ENCODE measurements at regions of chr10 and their contacts with region 1.

Region 1: DNA sequence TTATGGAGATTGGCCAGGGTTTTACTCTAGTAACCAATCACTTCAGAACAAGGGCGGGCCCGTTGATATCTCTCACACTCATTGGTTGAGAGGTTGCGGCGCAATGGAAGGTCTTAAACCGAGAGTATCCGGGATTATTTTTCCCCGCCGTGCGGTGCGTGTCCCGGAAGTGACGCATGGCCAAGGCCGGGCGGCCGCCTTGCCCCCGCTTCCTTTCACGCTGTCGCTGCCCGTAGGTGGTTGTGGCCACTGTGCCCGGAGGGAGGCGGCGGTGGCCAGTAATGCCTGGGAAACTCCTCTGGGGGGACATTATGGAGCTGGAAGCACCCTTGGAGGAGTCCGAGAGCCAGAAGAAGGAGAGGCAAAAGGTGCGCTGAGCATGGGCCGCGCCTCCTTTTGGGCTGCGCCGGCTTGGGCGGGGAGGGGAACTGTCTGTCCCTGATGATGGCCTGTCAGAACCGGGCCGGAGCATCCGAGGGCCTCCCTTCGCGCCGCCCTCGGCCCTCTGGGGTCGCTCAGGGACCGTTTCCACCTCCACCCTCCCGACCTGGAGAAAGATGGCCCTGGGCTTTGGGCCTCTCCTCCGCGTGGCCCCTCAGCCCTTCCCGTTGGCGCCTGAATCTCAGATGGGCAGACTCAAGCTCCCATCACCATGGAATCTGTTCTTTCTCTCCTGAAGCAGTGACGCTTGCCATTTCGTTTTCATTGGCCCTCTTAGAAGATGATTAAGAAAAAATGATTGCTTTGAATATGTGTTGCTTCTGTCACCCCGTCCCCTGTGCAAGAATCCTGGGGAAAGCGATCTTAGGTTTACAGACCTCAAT is at the start of gene DDX50:
- DNase-seq: peak; percentile 95
- H3K4me3 Mint-ChIP-seq: peak within 1 kb of the TSS; percentile 92
- H3K27ac Mint-ChIP-seq: peak within 1 kb of the TSS; percentile 99
- H3K4me1 Mint-ChIP-seq: peaks cover 40% of the 10 kb centered on the region
- H3K27me3 Mint-ChIP-seq: peaks cover 3% of the 10 kb centered on the region
- total RNA-seq, gene DDX50: 57.0 and 63.4 TPM in 2 replicates

Region 2: DNA sequence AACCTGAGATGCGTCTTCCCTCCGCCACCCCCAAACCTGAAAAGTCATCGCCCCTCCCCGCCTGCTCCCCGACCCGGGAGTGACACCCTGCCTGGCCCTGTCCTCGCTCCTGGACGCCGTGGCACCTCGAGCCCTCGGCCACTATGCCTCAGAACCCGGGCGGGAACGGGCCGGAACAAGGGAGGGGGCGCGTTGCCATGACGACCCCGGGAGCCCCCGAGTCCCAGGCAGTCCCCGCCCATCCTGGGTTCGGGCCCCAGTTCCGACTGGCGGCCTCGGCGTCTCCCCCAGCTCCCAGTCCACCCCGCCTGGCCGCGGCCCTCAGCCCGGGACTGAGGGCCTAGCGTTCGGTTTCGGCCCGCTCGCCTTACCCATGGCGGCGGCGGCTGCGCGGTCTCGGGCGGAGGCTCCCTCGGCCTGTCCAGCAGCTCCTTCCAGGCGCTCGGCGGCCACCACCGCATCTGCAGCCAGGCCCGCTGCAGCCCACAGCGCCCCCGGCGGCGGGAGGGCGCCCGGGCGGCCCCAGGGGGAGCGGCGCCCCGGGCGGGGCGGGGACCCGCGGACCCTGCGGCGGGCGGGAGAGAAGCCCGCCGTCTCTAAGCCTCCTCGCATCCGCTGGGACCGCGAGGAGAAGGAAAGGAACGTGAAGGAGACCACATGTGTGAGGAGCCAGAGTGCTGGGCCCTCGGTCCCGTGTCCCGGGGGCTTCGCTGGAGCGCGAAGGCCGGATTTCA is 494.3 kb before region 1 on chr10 and contains the start of gene RUFY2:
- intact Hi-C with region 1: loop called (anchors 10 kb)
- DNase-seq: peak; percentile 75
- H3K4me3 Mint-ChIP-seq: peak within 1 kb of the TSS; percentile 87
- H3K27ac Mint-ChIP-seq: peak within 1 kb of the TSS; percentile 80
- H3K4me1 Mint-ChIP-seq: peaks cover 14% of the 10 kb centered on the region
- H3K27me3 Mint-ChIP-seq: no peaks in the 10 kb centered on the region
- total RNA-seq, gene RUFY2: 11.3 and 12.1 TPM in 2 replicates

Region 3: GRCh38 chr10:68526626-68527307 is 374.5 kb before region 1 on chr10:
- intact Hi-C with region 1: loop called (anchors 2 kb)
- DNase-seq: no peak
- H3K4me3 Mint-ChIP-seq: peak overlapping the region; percentile 92
- H3K27ac Mint-ChIP-seq: peak overlapping the region; percentile 88
- H3K4me1 Mint-ChIP-seq: peaks cover 8% of the 10 kb centered on the region
- H3K27me3 Mint-ChIP-seq: no peaks in the 10 kb centered on the region

Region 4: GRCh38 chr10:68792115-68792514 is 109.2 kb before region 1 on chr10:
- intact Hi-C with region 1: loop called (anchors 5 kb)
- DNase-seq: no peak
- H3K4me3 Mint-ChIP-seq: no peak overlapping the region
- H3K27ac Mint-ChIP-seq: no peak overlapping the region
- H3K4me1 Mint-ChIP-seq: no peaks in the 10 kb centered on the region
- H3K27me3 Mint-ChIP-seq: no peaks in the 10 kb centered on the region

Region 5: GRCh38 chr10:69069090-69070042 is 168.1 kb after region 1 on chr10:
- intact Hi-C with region 1: no loop called
- DNase-seq: no peak
- H3K4me3 Mint-ChIP-seq: no peak overlapping the region
- H3K27ac Mint-ChIP-seq: no peak overlapping the region
- H3K4me1 Mint-ChIP-seq: peaks cover 28% of the 10 kb centered on the region
- H3K27me3 Mint-ChIP-seq: no peaks in the 10 kb centered on the region

Region 6: DNA sequence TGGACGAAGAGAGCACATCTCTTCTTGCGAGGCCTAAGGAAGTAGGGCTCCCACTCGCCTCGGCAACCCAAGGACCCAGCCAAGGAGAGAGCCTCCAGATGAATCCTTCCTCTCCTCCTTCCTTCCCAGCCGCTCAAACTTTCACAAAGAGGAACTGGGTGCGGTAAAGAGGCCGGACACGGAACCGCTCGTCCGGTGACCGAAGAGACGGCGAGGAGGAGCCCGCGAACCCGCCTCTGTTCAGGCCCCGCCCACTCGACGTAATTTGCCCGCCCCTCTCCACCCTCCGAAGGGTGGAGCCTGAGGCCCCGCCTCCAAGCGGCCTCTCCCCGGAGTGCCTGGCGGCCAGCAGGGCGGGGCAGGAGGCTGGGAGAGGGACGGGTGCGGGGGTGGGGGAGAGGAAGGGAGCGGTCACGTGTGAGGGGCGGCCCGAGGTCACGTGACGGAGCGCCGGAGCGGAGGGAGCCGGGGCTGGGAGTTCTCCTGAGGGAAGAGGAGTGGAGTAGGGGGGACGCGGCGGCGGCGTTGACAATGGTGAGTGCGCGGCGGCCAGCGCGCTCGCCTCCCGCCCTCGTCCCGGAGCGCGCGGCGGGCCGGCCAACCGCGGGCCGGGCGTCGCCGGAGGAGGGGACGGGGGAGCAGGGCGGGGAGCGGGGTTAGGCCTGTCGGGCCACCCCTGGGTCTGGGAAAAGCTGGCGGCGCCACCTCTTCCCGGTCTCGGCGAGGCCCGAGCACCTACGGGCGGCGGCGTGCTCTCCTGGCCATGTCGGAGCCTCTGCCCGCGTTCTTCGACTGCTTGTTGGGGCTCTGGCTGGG is 222.6 kb after region 1 on chr10 and contains the start of gene VPS26A:
- intact Hi-C with region 1: loop called (anchors 1 kb)
- DNase-seq: peak; percentile 98
- H3K4me3 Mint-ChIP-seq: peak within 1 kb of the TSS; percentile 94
- H3K27ac Mint-ChIP-seq: peak within 1 kb of the TSS; percentile 86
- H3K4me1 Mint-ChIP-seq: peaks cover 21% of the 10 kb centered on the region
- H3K27me3 Mint-ChIP-seq: no peaks in the 10 kb centered on the region
- total RNA-seq, gene VPS26A: 28.4 and 31.1 TPM in 2 replicates

Measured in activated T-helper 2 cell treated with anti-CD3 and anti-CD28 coated beads, Interferon-gamma antibody, Interleukin-2, Interleukin-4, amounts not matched to agents 10 μg/mL and 5 μg/mL and 100 μg/mL, durations not matched to agents 14 hours and 24 hours and 36 hours (primary cell).